A549 (cell line): ENCODE measurements at regions of chr15 and their contacts with region 1.

Region 1: GRCh38 chr15:90143166-90143655 is 40.9 kb upstream of the IDH2 start:
- DNase-seq: peak; percentile 88 to 91
- ATAC-seq: peak; percentile 99
- H3K4me3 ChIP-seq: no peak overlapping the region
- H3K27ac ChIP-seq: peak overlapping the region; percentile 58 to 82
- H3K4me1 ChIP-seq: peaks cover 14% of the 10 kb centered on the region
- CTCF ChIP-seq: peak; percentile 99
- EP300 ChIP-seq: no peak
- POLR2A ChIP-seq: no peak
- RAD21 ChIP-seq: peak; percentile 99 to 100

Region 2: DNA sequence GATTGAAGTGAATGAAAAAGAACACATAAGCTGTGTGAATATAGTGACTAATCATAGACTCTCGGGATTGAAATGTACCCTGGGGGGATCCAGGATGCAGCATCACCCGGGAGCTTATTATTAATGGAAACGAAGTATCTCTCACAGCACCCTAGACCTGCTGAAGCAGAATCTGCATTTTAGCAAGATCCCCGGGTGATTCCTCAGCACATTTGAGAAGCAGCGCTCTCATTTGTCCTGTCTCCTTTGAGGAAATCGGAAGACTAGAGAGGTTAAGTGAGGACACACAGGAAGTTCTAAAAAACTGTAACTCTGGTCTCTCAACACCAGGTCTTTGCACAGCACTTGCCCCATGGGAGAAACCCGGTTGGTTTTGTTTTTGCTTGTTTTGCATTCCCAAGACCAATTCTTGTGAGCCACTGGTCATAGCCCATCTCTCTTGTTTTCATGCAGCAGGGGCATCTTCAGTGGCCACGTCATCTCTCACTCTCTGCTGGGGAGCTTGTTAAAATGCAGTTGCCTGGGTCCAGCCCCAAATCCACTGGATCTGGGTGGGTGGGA is 111.9 kb before region 1 on chr15:
- CTCF ChIA-PET with region 1: no interaction called
- POLR2A ChIA-PET with region 1: no interaction called
- DNase-seq: no peak
- ATAC-seq: no peak
- H3K4me3 ChIP-seq: no peak overlapping the region
- H3K27ac ChIP-seq: no peak overlapping the region
- H3K4me1 ChIP-seq: peaks cover 28% of the 10 kb centered on the region
- CTCF ChIP-seq: no peak
- EP300 ChIP-seq: no peak
- POLR2A ChIP-seq: no peak
- RAD21 ChIP-seq: no peak

Region 3: GRCh38 chr15:90121086-90121485 is 22.1 kb before region 1 on chr15:
- CTCF ChIA-PET with region 1: interaction called, 16 read pairs
- POLR2A ChIA-PET with region 1: interaction called, 3 read pairs
- DNase-seq: no peak
- ATAC-seq: no peak
- H3K4me3 ChIP-seq: no peak overlapping the region
- H3K27ac ChIP-seq: no peak overlapping the region
- H3K4me1 ChIP-seq: peaks cover 3% of the 10 kb centered on the region
- CTCF ChIP-seq: no peak
- EP300 ChIP-seq: no peak
- POLR2A ChIP-seq: no peak
- RAD21 ChIP-seq: no peak

Region 4: DNA sequence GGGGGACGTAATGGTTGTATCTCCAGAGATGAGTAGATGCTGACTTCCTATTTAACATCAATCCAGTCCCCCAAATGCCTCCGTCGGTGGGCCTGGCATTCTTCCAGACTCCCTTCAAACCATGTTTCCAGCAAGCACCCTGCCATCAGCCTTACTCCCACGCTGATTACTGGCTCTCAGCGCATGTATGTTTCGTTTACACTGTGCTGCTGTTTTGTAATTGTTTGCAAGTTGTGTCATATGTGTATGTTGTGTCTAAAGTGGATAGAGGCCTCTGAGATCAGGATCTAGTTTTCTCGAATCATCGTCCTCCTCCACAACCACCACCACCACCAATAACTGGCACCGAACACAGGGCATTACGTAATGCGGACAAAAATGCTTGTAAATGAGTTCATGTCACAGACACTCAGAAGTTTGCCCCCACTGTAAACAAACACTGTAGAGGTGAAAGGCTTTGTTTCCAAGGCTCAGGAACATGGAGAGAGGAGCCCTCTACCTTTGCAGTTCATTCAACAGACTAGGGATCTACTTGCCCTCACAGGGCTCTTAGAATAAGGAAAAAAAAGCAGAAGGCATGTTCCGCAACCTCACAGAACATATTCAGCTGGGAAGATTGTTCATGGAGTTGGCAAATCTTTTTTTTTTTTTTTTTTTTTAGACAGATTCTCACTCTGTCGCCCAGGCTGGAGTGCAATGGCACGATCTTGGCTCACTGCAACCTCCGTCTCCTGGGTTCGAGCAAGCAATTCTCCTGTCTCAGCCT is 11.8 kb after region 1 on chr15:
- CTCF ChIA-PET with region 1: interaction called, 43 read pairs
- POLR2A ChIA-PET with region 1: interaction called, 4 read pairs
- DNase-seq: peak; percentile 62 to 96
- ATAC-seq: peak; percentile 41 to 57
- H3K4me3 ChIP-seq: no peak overlapping the region
- H3K27ac ChIP-seq: peak overlapping the region; percentile 70 to 77
- H3K4me1 ChIP-seq: peaks cover 62% of the 10 kb centered on the region
- CTCF ChIP-seq: no peak; the same call in 2 of the 3 replicates
- EP300 ChIP-seq: peak; percentile 85; a peak in 3 of 5 replicates
- POLR2A ChIP-seq: no peak
- RAD21 ChIP-seq: peak in 1 of 2 experiments; percentile 54; a peak in 2 of 5 replicates

Region 5: DNA sequence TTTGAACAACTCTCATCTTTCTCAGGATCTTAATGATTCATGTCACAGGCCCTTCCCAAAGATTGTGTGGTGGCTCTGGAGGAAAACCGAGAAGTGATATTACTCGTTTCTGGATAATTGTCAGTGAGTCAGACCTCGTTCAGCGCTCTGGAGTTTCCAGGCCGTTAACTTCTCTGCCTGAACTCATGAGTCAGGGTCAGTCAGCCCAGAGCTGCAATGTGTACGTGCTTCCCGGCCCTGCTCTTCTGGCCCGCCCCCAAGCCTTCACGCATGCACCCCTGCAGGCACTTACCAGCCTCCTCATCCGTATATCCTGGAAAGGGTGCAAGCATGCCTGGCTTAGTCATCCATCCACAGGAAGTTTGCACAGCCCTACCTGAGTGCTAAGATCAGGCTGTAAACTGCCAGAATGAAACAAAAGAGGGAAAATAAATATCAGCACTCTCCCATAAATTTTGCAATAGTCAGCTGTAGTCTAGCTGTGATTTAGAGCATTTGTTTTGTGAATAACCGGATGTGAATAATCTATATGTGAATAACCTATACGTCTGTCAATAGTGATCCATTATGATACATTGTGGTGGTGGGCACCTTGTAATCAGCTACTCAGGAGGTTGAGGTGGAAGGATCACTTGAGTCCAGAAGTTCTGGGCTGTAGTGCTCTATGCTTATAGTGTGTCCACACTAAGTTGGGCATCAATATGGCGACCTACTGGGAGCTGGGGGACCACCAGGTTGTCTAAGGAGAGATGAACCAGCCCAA is 22.6 kb after region 1 on chr15:
- CTCF ChIA-PET with region 1: no interaction called
- POLR2A ChIA-PET with region 1: no interaction called
- DNase-seq: peak; percentile 95 to 100
- ATAC-seq: peak; percentile 98 to 99
- H3K4me3 ChIP-seq: no peak overlapping the region
- H3K27ac ChIP-seq: peak overlapping the region; percentile 85 to 94
- H3K4me1 ChIP-seq: peaks cover 50% of the 10 kb centered on the region
- CTCF ChIP-seq: no peak
- EP300 ChIP-seq: peak; percentile 90 to 95
- POLR2A ChIP-seq: no peak
- RAD21 ChIP-seq: peak; percentile 16 to 55; a peak in 4 of 5 replicates

Region 6: DNA sequence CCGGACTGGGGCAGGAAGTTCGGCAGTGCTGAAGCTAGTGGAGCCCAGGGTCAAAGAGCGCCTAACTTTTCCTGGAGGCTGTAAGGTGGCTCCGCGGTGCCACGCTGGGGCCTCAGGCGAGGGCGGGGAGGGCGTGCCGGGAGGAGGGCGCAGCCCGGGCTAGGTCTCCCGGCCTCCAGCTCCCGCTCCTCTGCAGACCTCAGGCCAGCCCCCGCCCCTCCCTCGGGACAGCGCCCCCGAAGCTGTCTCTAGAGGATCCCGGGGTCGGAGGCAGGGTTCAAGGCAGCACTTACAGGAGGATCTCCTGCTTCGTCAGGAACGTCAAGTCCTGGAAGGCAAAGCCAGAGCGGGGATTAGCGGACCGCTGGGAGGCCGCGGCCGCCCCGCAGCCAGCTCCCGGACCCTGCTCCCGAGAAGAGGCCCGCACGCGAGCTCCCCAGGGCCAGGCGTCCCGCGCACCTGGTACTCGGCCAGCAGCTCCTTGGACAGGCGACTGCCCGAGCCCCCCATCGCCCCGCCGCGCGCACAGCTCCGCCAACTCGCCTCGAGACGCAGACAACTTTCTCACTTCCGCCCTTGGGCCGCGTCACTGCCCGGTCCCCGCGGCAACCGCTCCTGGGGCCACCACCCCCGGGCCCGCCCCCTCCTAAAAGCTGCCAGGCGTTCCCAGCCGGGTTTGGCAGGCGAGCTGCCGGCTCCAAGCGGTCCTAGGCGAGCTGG is 90.3 kb after region 1 on chr15 and contains the start of gene CIB1:
- CTCF ChIA-PET with region 1: interaction called, 732 read pairs
- POLR2A ChIA-PET with region 1: interaction called, 6 read pairs
- DNase-seq: peak; percentile 85 to 97
- ATAC-seq: peak; percentile 84 to 92
- H3K4me3 ChIP-seq: peak within 1 kb of the TSS; percentile 85
- H3K27ac ChIP-seq: peak within 1 kb of the TSS; percentile 86 to 90
- H3K4me1 ChIP-seq: peaks cover 26% of the 10 kb centered on the region
- CTCF ChIP-seq: no peak; the same call in none of the 3 replicates
- EP300 ChIP-seq: no peak
- POLR2A ChIP-seq: peak; percentile 44
- RAD21 ChIP-seq: no peak; a peak in 1 of 5 replicates
- polyA plus RNA-seq, gene CIB1: 84.1 and 130 TPM in 2 replicates

Region 7: DNA sequence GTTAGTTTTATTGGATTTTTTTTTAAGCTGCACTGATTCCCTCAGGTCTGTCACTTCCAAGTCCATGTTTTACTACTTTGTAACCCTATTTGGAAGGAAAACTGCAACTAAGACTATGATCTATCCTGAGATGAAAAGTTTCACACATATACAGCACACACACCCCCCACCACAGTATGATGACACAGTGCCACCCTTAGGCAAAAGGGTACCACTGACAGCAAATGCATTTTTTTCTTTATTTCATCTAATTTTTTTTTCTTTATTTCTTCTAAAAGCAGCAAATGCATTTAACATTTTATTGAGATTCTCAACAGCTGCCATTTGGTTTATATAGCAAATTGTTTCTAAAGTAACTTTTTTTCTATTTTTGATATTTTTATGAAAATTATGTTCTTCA is 143.5 kb after region 1 on chr15:
- CTCF ChIA-PET with region 1: interaction called, 30 read pairs
- POLR2A ChIA-PET with region 1: no interaction called
- DNase-seq: peak; percentile 55 to 67
- ATAC-seq: peak; percentile 83 to 90; a peak in 5 of 6 replicates
- H3K4me3 ChIP-seq: no peak overlapping the region
- H3K27ac ChIP-seq: no peak overlapping the region
- H3K4me1 ChIP-seq: no peaks in the 10 kb centered on the region
- CTCF ChIP-seq: peak; percentile 86
- EP300 ChIP-seq: no peak
- POLR2A ChIP-seq: no peak
- RAD21 ChIP-seq: peak; percentile 81 to 90

Region 8: DNA sequence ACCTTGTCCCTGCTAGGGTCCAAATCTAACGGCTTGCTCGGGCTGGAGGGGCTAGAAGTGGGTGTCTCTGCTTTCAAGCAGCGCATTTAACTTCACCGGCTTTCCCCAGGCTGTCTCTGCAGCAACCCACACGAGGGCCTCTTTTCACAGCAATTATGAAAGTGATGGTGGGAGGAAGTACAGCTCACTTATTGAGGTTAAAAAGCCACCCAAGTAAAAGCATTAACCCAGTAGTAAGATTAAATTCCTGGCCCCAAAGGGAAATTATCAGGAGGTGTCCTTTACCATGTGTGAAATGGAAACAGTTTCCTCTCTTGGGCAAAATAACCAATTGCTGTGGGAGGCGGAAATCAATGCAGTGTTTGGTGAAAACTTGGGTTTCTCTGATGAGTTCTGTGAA is 163.3 kb after region 1 on chr15:
- CTCF ChIA-PET with region 1: interaction called, 12 read pairs
- POLR2A ChIA-PET with region 1: no interaction called
- DNase-seq: no peak
- ATAC-seq: no peak
- H3K4me3 ChIP-seq: no peak overlapping the region
- H3K27ac ChIP-seq: no peak overlapping the region
- H3K4me1 ChIP-seq: no peaks in the 10 kb centered on the region
- CTCF ChIP-seq: no peak
- EP300 ChIP-seq: no peak
- POLR2A ChIP-seq: no peak
- RAD21 ChIP-seq: no peak